B cell (primary cell): ENCODE measurements at regions of chr10 and their contacts with region 1.

Region 1: GRCh38 chr10:101353692-101354327 is at the start of gene BTRC:
- DNase-seq: peak; percentile 99
- ATAC-seq: peak; percentile 96
- H3K4me3 ChIP-seq: peak within 1 kb of the TSS; percentile 63 to 87 (median 79)
- H3K4me3 Mint-ChIP-seq: peak within 1 kb of the TSS; percentile 94
- H3K27ac ChIP-seq: peak within 1 kb of the TSS; percentile 42 to 88
- H3K27ac Mint-ChIP-seq: peak within 1 kb of the TSS; percentile 99
- H3K4me1 ChIP-seq: peaks cover 11 to 13% of the 10 kb centered on the region in 2 donors
- H3K4me1 Mint-ChIP-seq: peaks cover 22% of the 10 kb centered on the region
- H3K27me3 ChIP-seq: peaks cover 0 to 15% (median 2%) of the 10 kb centered on the region in 4 experiments
- H3K27me3 Mint-ChIP-seq: peaks cover 20% of the 10 kb centered on the region
- CTCF ChIP-seq: no peak
- total RNA-seq, gene BTRC: 20.1 and 21.9 TPM in 2 replicates

Region 2: GRCh38 chr10:100912605-100913469 is 441.0 kb before region 1 on chr10 and contains the start of gene SLF2:
- CTCF ChIA-PET with region 1: no interaction called
- POLR2A ChIA-PET with region 1: no interaction called
- intact Hi-C with region 1: loop called (anchors 2 kb)
- DNase-seq: peak; percentile 97
- ATAC-seq: peak; percentile 97
- H3K4me3 ChIP-seq: peak within 1 kb of the TSS; percentile 66 to 94 (median 90)
- H3K4me3 Mint-ChIP-seq: peak within 1 kb of the TSS; percentile 99
- H3K27ac ChIP-seq: peak within 1 kb of the TSS; percentile 66 to 90
- H3K27ac Mint-ChIP-seq: peak within 1 kb of the TSS; percentile 97
- H3K4me1 ChIP-seq: peaks cover 20% of the 10 kb centered on the region in 2 donors
- H3K4me1 Mint-ChIP-seq: peaks cover 34% of the 10 kb centered on the region
- H3K27me3 ChIP-seq: no peaks in the 10 kb centered on the region
- H3K27me3 Mint-ChIP-seq: no peaks in the 10 kb centered on the region
- CTCF ChIP-seq: no peak
- total RNA-seq, gene SLF2: 65.6 and 66.7 TPM in 2 replicates

Region 3: DNA sequence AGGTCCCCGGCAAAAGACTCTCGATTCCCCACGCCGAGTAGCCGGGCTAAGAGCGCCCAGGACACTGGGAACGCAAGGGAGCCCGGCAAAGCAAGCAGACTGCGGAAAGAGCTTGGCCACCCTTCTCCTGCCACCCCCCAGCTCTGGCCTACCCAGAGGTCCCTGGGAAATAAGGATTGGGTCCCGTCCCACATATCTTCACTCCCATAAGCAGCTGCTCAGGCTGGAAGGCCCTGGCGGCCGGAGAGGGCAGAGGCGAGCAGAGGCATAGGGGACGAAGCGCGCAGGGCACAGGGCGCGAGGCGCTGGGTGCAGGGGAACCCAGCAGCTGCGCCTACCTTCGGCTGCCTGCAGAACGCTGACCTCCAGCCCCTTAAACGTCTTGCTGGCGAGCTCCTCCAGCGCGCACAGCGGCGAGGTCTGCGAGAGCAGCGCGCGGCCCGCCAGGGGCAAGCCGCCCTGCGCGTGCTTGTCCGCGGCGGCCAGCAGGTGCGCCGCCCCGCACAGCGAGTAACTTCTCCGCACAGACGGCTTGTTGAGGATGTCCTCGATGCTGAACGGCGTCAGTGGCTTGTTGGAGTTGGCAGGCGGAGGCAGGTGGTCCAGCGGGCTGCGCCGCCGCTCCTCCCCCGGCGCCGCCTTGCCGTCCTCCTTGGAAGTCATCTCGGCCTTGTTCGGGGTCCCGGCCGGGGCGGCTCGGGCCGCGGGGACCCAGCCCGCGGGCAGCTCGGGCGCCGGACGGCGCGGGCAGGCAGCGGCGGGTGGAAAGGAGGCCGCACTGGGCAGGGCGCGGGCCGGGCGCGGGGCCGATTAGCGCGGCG is 125.4 kb before region 1 on chr10:
- CTCF ChIA-PET with region 1: no interaction called
- POLR2A ChIA-PET with region 1: no interaction called
- intact Hi-C with region 1: loop called (anchors 5 kb)
- DNase-seq: no peak
- ATAC-seq: no peak
- H3K4me3 ChIP-seq: no peak overlapping the region
- H3K4me3 Mint-ChIP-seq: peak overlapping the region; percentile 73
- H3K27ac ChIP-seq: no peak overlapping the region
- H3K27ac Mint-ChIP-seq: peak overlapping the region; percentile 46
- H3K4me1 ChIP-seq: peaks cover 53 to 79% of the 10 kb centered on the region in 2 donors
- H3K4me1 Mint-ChIP-seq: peaks cover 41% of the 10 kb centered on the region
- H3K27me3 ChIP-seq: peaks cover 0 to 90% (median 77%) of the 10 kb centered on the region in 4 experiments
- H3K27me3 Mint-ChIP-seq: peaks cover 65% of the 10 kb centered on the region
- CTCF ChIP-seq: no peak

Region 4: DNA sequence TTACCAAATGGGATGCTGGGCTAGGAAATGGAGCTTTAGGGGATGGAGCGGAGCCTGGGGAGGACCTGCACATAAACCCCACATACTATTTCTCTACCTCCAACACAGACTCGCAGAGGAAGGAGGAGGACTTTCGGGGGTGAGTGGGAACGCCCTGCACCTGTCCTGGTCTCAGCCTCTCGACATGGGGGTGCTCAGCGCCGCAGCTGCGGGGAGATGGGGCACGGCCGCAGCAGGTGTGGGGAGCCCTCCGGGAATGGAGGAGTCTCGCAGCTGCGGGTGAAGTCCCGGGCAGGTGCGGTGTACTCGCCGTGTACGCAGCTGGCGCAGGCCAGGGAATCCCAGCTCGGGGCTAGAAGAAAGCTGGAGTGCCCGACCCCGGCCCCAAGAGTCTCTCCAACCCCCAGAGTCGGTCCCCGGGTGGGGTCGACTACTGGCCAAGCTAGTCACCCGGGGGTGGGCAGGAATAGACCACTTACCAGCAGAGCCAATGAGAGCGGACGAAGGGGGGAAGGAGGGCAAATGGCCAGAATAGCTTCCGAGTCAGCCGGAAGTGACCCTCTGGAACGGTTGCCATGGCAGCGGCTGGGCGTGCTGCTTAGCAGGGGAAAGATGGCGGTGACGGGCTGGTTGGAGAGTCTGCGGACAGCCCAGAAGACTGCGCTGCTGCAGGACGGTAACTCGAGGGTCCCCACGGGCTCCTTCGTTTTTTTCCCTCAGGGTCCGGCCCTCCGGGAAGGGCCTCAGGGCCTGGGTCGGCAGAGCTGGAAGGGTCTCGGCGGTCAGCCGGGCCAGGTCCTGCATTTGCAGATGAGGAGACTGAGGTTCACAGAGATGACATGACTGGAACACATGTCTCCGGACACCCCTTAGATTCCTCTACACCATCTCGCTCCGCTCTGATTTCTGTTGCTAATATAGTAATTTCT is 234.2 kb after region 1 on chr10 and contains the starts of genes DPCD and POLL:
- CTCF ChIA-PET with region 1: no interaction called
- POLR2A ChIA-PET with region 1: no interaction called
- intact Hi-C with region 1: loop called (anchors 2 kb)
- DNase-seq: peak; percentile 92
- ATAC-seq: peak; percentile 96
- H3K4me3 ChIP-seq: peak within 1 kb of the TSS; percentile 57 to 95 (median 91)
- H3K4me3 Mint-ChIP-seq: peak within 1 kb of the TSS; percentile 96
- H3K27ac ChIP-seq: peak within 1 kb of the TSS; percentile 70 to 86
- H3K27ac Mint-ChIP-seq: peak within 1 kb of the TSS; percentile 85
- H3K4me1 ChIP-seq: peaks cover 15 to 19% of the 10 kb centered on the region in 2 donors
- H3K4me1 Mint-ChIP-seq: peaks cover 21% of the 10 kb centered on the region
- H3K27me3 ChIP-seq: no peaks in the 10 kb centered on the region
- H3K27me3 Mint-ChIP-seq: no peaks in the 10 kb centered on the region
- CTCF ChIP-seq: no peak
- total RNA-seq, gene DPCD: 1.6 and 2.2 TPM in 2 replicates
- total RNA-seq, gene POLL: 46.7 TPM in 2 replicates

Region 5: DNA sequence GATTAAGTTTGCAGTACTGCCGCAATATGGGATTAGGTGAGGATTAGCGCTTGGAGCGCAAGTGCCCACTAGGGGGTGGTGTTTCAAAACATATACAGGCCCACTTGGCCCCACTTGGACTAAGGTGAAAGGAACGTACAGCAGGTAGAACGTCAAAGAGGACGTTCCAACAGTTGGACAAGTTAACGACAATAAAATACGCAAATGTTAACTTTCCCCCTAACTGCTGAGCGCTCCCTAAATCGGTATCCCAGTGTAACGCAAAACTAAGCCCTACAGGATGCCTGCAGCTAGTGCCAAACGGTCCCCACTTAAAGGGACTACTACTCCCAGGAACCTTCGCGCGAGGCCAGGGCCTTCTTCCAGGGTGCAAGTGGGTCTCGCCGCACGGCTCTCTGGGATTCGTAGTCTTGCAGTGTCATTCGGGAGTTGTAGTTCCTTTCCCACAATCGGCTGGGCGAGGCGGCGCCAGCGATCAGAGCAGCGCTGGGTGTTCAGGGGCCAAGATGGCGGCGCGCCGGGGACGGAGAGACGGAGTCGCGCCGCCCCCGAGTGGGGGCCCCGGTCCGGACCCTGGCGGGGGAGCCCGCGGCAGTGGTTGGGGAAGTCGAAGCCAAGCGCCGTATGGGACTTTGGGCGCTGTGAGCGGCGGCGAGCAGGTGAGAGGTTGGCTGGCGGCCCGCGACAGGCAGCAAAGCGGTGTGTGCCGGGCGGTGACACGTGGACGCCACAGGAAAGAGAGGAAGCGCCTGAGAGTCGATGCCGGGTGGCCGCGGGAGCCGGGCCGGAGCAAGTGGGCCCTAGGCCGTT is 779.0 kb after region 1 on chr10 and contains the start of gene PPRC1:
- CTCF ChIA-PET with region 1: no interaction called
- POLR2A ChIA-PET with region 1: no interaction called
- intact Hi-C with region 1: loop called (anchors 5 kb)
- DNase-seq: peak; percentile 98
- ATAC-seq: peak; percentile 94
- H3K4me3 ChIP-seq: peak within 1 kb of the TSS; percentile 70 to 97 (median 82)
- H3K4me3 Mint-ChIP-seq: peak within 1 kb of the TSS; percentile 94
- H3K27ac ChIP-seq: peak within 1 kb of the TSS; percentile 79 to 88
- H3K27ac Mint-ChIP-seq: peak within 1 kb of the TSS; percentile 94
- H3K4me1 ChIP-seq: peaks cover 18 to 25% of the 10 kb centered on the region in 2 donors
- H3K4me1 Mint-ChIP-seq: peaks cover 36% of the 10 kb centered on the region
- H3K27me3 ChIP-seq: no peaks in the 10 kb centered on the region
- H3K27me3 Mint-ChIP-seq: no peaks in the 10 kb centered on the region
- CTCF ChIP-seq: peak; percentile 96
- total RNA-seq, gene PPRC1: 35.3 and 36.3 TPM in 2 replicates